ENCODE measurements at regions of chr2 and their contacts with region 1.

Region 1: DNA sequence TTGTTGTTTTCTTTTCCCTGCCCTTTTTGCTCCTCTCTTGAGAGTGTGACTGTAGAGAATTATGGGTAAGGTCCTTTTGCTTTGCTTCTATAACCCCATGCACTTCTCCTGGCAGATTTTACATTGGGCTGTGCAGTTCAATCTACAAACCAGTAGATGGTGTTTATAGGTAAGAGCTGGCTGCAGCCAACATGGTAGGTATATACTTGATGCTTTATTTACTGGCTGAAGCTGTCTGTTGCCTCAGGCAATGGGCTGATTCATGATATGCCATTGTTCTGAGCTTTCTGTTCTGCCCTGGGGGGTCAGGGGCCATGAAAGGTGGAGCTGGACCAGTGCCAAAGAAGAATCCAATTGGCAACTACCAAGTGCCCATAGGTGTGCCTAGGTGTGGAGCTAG is 48.3 kb upstream of the MYL1 start:
- DNase-seq: no peak
- ATAC-seq: peak; percentile 71
- H3K4me3 ChIP-seq: no peak overlapping the region
- H3K27ac ChIP-seq: no peak overlapping the region
- H3K4me1 ChIP-seq: no peaks in the 10 kb centered on the region
- H3K27me3 ChIP-seq: no peaks in the 10 kb centered on the region; a peak in 1 of 4 replicates
- CTCF ChIP-seq: peak; percentile 16 to 27 (median 22); a peak in 3 of 6 replicates
- EP300 ChIP-seq: no peak
- POLR2A ChIP-seq: no peak
- RAD21 ChIP-seq: no peak

Region 2: GRCh38 chr2:210252699-210253606 is 110.3 kb before region 1 on chr2:
- CTCF ChIA-PET with region 1: no interaction called
- POLR2A ChIA-PET with region 1: no interaction called
- RAD21 ChIA-PET with region 1: no interaction called
- SMC1A ChIA-PET with region 1: interaction called, 11 read pairs
- in situ Hi-C with region 1: no loop called
- intact Hi-C with region 1: no loop called
- DNase-seq: no peak
- ATAC-seq: peak; percentile 19; the same call in 2 of the 3 replicates
- H3K4me3 ChIP-seq: no peak overlapping the region
- H3K27ac ChIP-seq: no peak overlapping the region
- H3K4me1 ChIP-seq: no peaks in the 10 kb centered on the region
- H3K27me3 ChIP-seq: no peaks in the 10 kb centered on the region
- CTCF ChIP-seq: no peak
- EP300 ChIP-seq: no peak
- POLR2A ChIP-seq: no peak
- RAD21 ChIP-seq: no peak

Region 3: GRCh38 chr2:211157856-211158463 is 794.7 kb after region 1 on chr2:
- CTCF ChIA-PET with region 1: no interaction called
- POLR2A ChIA-PET with region 1: no interaction called
- RAD21 ChIA-PET with region 1: no interaction called
- SMC1A ChIA-PET with region 1: no interaction called
- in situ Hi-C with region 1: no loop called
- intact Hi-C with region 1: no loop called
- DNase-seq: peak; percentile 4
- ATAC-seq: peak; percentile 98
- H3K4me3 ChIP-seq: no peak overlapping the region
- H3K27ac ChIP-seq: no peak overlapping the region
- H3K4me1 ChIP-seq: no peaks in the 10 kb centered on the region
- H3K27me3 ChIP-seq: no peaks in the 10 kb centered on the region
- CTCF ChIP-seq: peak; percentile 73 to 92 (median 79)
- EP300 ChIP-seq: no peak
- POLR2A ChIP-seq: no peak
- RAD21 ChIP-seq: peak; percentile 52

Region 4: GRCh38 chr2:211665299-211665698 is 1302.0 kb after region 1 on chr2:
- CTCF ChIA-PET with region 1: no interaction called
- POLR2A ChIA-PET with region 1: no interaction called
- RAD21 ChIA-PET with region 1: no interaction called
- SMC1A ChIA-PET with region 1: no interaction called
- in situ Hi-C with region 1: no loop called
- intact Hi-C with region 1: no loop called
- DNase-seq: no peak
- ATAC-seq: no peak
- H3K4me3 ChIP-seq: no peak overlapping the region
- H3K27ac ChIP-seq: no peak overlapping the region
- H3K4me1 ChIP-seq: no peaks in the 10 kb centered on the region
- H3K27me3 ChIP-seq: no peaks in the 10 kb centered on the region
- CTCF ChIP-seq: no peak
- EP300 ChIP-seq: no peak
- POLR2A ChIP-seq: no peak
- RAD21 ChIP-seq: no peak